Right ventricle myocardium inferior (tissue), 1 donor: ENCODE measurements at regions of chr12 and their contacts with region 1.

Region 1: DNA sequence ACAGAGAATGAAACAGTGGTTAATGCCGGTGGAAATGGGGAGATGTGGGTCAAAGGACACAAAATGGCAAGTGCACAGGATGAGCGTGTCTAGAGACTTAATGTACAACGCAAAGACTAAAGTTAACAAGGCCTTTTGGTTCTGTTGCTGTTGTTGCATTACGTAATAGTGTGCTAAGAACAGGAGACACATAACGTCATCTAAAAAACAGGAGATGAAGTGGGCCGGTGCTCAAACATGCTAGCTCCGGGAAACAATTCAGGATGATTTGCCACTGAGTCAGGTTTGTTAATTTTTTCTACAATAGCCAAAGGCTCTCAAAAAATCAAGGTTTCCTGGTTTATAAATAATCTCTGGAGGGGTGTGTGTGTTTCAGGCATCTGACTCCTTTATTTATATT is 55.5 kb downstream of the ETV6 start:
- DNase-seq: no peak
- ATAC-seq: no peak

Region 2: DNA sequence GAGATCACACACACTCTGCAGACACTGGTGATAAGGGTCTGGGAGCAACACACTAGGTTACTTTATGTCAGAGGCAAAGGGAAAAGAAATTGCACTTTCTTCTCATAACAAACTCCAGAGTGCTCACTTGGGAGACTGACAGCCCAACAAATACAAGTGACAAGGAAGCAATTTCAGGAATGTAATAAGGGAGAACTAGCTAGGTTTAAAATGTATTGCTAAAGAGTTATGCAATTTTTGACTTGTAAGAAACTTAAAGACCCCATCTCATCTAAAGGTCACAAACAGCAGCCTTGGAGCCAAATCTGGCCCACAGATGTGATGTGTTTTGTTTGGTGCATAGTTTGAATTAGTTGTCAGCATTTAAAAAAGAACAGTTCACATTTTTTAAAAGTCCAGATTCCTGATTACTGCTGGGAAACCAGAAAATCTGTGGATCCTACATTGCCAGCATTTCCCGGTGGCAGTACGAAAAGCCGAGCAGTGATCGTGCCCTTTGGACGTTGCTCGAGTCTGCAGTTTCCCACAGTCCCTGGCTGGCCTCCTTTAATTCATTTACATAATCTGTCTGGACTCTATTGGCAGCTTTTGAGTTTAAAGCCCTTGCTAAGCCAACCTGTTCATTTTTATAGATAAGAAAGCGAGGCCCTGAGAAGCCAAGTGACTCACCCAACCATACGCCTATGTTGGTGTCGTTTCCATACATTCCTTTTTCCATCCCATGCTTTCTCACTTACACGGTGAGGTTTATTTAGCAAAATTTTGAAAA is 97.5 kb before region 1 on chr12:
- intact Hi-C with region 1: no loop called
- DNase-seq: no peak
- ATAC-seq: no peak

Region 3: GRCh38 chr12:11672256-11673191 is 32.5 kb before region 1 on chr12:
- intact Hi-C with region 1: loop called (anchors 5 kb)
- DNase-seq: no peak
- ATAC-seq: peak; percentile 76

Region 4: DNA sequence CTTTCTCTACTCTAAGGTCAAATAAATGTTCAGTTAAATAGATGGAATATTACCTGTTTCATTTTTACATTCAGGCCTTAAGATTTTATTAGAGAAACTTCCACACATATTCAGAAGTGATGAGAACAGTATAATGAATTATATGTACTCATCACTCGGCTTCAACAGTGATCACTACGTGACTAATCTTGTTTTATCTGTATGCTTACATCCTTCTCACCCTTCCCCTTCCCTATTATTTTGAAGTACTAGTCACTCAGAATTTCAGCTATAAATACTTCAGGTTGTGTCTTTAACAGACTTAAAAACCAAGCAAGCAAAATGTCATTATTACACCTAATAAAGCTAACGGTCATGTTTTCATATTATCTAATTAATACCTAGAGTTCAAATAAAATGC is 20.6 kb before region 1 on chr12:
- intact Hi-C with region 1: no loop called
- DNase-seq: no peak
- ATAC-seq: no peak

Region 5: GRCh38 chr12:12182703-12183365 is 477.8 kb after region 1 on chr12:
- intact Hi-C with region 1: no loop called
- DNase-seq: no peak
- ATAC-seq: no peak